ENCODE measurements at regions of chr9 and their contacts with region 1.

Region 1: DNA sequence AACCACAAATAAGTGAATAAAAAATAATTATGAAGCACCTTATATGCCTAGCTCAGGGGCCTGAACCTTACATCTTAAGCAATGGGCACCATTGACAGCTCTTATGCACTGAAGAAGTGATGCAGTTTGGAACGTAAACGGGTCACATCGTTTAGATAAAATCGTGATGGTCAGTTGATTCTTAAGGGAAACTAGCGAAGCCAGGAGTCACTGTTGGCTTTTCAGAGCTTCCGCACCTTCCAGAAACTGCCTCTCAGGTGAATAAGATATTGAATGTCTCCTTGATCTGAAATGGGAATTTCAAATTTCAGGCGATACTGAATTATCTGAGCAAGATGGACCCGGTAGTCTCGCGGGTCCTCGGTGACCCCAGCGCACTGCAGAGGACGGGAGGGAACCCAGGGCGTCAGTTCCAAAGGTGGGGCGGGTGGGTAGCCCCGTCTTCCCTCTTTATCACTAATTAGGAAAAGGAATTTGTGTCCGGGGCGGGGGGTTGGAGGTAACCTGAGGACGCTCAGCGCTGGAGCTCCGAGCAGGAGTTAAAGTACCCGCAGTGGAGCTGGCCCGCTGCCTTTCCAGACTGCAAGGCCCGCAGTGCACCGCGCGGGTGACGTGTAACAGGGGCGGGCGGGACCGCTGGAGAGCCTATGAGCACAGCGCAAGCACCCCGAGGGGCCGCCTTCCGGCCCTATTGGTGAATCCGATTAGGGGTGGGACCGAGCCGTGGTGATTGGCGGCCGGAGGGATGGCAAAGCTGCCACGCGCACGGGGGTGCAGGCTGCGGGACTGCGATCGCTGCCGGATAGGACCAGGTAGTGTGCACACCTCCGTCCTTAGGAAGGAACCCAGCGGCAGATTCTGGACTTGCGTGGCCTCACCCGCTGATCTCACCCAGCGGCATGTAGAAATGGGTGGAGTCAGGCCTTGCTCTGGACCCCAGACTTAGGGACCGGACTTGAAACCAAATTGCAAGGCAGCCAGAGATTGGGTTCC is 19.7 kb upstream of the GARNL3 start:
- ATAC-seq: peak; percentile 100
- H3K4me3 ChIP-seq: peak overlapping the region; percentile 51 to 59 (median 57)
- H3K27ac ChIP-seq: no peak overlapping the region
- H3K4me1 ChIP-seq: peaks cover 3 to 9% of the 10 kb centered on the region in 2 donors

Region 2: DNA sequence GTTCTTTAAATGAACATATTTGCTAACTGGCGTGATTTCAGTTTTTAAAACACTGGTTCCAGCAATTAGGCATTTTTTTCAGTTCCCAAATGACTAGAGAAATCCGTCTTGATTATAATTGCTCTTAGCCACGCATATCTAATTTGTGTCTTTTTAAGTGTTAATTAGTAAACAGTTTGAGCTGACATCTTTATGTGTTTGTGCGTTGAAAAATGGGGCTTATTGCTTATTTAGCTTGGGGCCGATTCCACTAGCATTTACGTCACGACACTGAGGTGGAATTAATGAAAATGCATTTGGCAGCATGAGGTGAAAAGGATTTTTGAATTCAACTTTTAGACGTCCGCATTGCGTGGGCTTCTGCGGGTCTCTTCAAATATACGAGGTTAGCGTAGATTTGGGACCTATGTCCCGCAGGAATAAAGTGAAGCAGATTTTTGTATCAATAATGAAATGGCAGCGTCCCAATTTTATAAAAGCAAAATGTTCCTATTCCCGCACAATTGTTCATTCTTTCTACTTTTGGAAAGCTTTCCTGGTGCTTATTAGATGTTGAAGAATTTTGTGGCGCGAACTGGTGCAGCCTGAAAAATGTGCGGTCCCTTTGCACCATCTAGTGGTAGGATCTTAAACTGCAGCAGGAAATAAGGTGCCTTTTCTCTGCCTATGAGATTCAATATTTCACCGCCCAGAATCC is 753.9 kb before region 1 on chr9:
- in situ Hi-C with region 1: no loop called
- ATAC-seq: peak; percentile 39 to 70 (median 50)
- H3K4me3 ChIP-seq: no peak overlapping the region
- H3K27ac ChIP-seq: no peak overlapping the region
- H3K4me1 ChIP-seq: peaks cover 0 to 25% of the 10 kb centered on the region in 2 donors

Region 3: GRCh38 chr9:127396808-127397497 is 152.0 kb after region 1 on chr9 and contains the start of gene SLC2A8:
- in situ Hi-C with region 1: loop called in 1 of 9 experiments (anchors 25 kb)
- ATAC-seq: peak; percentile 90 to 94 (median 93)
- H3K4me3 ChIP-seq: peak within 1 kb of the TSS; percentile 64 to 85 (median 72)
- H3K27ac ChIP-seq: peak within 1 kb of the TSS; percentile 69 to 77
- H3K4me1 ChIP-seq: peaks cover 5 to 7% of the 10 kb centered on the region in 2 donors
- total RNA-seq, gene SLC2A8: 9.8 to 23.3 (median 11.3) TPM

Measured in motor neuron (in vitro differentiated cells).